ENCODE measurements at regions of chr18 and their contacts with region 1.

Region 1: DNA sequence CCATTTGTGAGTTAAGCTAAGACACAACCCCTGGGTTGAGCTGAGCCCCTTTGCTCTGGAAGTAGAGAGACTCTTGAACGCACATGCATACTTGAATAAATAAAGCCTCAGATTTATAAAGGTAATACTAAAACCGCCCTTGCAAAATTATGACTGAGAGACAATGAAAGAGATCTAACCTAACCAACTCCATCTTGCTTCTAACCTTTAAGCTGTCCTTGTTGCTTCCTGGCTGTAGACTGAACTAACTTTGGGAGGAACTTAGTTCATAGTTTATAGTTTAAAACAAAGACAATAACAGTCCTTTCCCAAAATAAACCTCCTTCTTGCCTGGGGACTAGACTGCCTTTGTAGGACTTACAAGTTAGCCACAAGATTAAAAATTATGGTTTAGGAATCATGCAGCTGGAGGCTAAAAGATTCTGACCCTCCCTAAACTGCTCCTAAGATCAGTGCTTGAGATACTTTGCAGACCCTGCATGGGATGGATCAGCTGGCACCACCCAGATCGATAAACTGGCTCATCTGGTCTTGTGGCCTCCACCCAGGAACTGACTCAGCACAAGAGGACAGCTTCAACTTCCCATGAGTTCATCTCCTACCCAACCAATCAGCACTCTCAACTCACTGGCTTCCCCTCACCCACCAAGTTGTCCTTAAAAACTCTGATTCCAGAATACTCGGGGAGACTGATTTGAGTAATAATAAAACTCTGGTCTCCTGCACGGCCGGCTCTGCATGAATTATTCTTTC is 240.2 kb upstream of the SLC14A2 start:
- DNase-seq: no peak
- H3K4me3 ChIP-seq: no peak overlapping the region
- H3K27ac ChIP-seq: no peak overlapping the region
- H3K4me1 ChIP-seq: no peaks in the 10 kb centered on the region
- H3K27me3 ChIP-seq: no peaks in the 10 kb centered on the region
- CTCF ChIP-seq: no peak
- EP300 ChIP-seq: no peak
- POLR2A ChIP-seq: no peak

Region 2: GRCh38 chr18:45398448-45398847 is 23.4 kb after region 1 on chr18:
- in situ Hi-C with region 1: no loop called
- intact Hi-C with region 1: loop called (anchors 1 kb)
- DNase-seq: no peak
- H3K4me3 ChIP-seq: no peak overlapping the region
- H3K27ac ChIP-seq: no peak overlapping the region
- H3K4me1 ChIP-seq: peaks cover 0 to 9% (median 0%) of the 10 kb centered on the region in 4 donors
- H3K27me3 ChIP-seq: no peaks in the 10 kb centered on the region
- CTCF ChIP-seq: no peak
- EP300 ChIP-seq: no peak
- POLR2A ChIP-seq: no peak

Measured in transverse colon (tissue), 4 donors.